ENCODE measurements at regions of chr2 and their contacts with region 1.

Region 1: DNA sequence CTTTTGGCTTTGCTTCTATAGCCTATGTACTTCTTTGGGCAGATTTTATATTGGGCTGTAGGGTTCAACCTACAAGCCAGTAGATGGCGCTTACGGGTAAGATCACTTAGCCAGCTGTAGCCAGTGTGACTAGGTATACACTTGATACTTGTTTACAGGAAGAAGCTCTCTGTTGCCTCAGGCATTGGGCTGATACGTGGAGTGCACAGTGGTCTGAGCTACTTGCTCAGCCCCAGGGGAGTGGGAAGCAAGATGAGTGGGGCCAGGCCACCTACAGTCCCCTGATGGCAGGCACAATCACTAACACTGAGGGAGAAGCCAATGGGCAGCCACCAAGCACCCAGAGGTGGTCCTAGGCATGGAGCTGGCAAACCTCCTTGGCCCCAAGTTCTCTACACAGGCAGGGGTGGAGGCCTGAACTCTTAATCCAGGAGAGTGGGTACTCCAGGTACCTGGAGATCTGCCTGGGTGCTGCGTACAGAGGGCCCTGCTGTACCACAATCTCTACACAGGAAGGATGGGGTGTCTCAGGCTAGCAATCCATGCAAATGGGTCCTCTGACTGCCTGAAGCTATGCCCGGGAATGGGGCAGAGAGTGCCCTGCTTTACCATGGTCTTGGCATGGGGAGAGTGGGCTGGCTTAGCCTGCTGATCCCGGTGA is 122.2 kb downstream of the NCOA1 start:
- DNase-seq: peak; percentile 44
- CTCF ChIP-seq: peak; percentile 38

Region 2: GRCh38 chr2:24682304-24682703 is 69.0 kb after region 1 on chr2:
- in situ Hi-C with region 1: no loop called
- DNase-seq: no peak
- CTCF ChIP-seq: no peak

Region 3: GRCh38 chr2:24827321-24828237 is 214.3 kb after region 1 on chr2:
- in situ Hi-C with region 1: loop called (anchors 10 kb)
- DNase-seq: peak; percentile 89
- CTCF ChIP-seq: peak; percentile 91